ENCODE measurements at regions of chr9 and their contacts with region 1.

Region 1: DNA sequence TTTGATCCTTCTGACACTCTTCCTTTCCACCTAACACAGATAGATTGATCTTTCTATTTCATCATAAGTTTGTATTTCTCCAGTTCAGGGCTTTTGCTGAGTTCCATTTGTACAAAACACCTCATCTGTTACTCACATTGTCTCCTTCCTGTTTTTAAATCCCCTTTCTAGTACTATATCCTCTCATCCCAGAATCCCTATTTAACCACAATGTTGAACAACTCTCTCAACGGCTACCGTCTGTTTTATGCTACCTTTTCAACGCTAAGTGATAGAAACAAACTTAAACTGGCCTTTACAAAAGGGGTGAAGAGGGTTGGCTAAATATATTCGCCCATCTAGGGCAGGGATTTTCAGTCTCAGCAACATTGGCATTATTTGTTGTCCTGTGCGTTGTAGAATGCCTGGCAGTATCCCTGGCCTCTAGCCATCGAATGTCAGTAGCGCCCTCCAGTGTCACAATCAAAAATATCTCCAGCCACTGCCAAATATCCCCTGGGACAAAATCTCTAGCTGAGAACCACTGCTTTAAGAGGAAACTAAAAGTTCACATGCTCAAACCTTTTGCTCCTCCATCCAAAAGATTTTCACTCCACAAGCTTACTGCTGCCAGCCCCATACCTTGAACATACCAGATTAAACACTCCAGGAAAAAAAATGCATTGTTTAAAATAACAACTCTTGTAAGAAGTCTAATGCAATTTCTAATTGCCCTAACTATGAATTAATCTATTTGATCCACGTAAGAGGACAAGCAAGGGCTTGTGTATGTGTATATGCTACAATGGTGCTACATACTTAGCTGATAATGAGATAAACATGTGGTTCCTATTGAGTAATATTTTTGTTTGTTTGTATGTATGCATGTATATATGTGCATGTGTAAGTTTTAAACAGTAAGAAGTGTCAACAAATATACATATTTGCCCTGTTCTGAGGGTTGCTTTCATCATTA is 344.0 kb downstream of the PTPRD start:
- DNase-seq: peak; percentile 84
- H3K4me3 ChIP-seq: no peak overlapping the region
- H3K27ac ChIP-seq: peak overlapping the region; percentile 51
- H3K4me1 ChIP-seq: peaks cover 23% of the 10 kb centered on the region
- H3K27me3 ChIP-seq: no peaks in the 10 kb centered on the region
- CTCF ChIP-seq: peak; percentile 63 to 65
- POLR2A ChIP-seq: no peak

Region 2: GRCh38 chr9:10045598-10045997 is 223.2 kb before region 1 on chr9:
- CTCF ChIA-PET with region 1: interaction called, 46 read pairs
- POLR2A ChIA-PET with region 1: interaction called, 3 read pairs
- dilution Hi-C with region 1: no loop called
- intact Hi-C with region 1: no loop called
- DNase-seq: peak; percentile 58
- H3K4me3 ChIP-seq: no peak overlapping the region
- H3K27ac ChIP-seq: no peak overlapping the region
- H3K4me1 ChIP-seq: no peaks in the 10 kb centered on the region
- H3K27me3 ChIP-seq: no peaks in the 10 kb centered on the region
- CTCF ChIP-seq: peak; percentile 11 to 42
- POLR2A ChIP-seq: no peak

Region 3: DNA sequence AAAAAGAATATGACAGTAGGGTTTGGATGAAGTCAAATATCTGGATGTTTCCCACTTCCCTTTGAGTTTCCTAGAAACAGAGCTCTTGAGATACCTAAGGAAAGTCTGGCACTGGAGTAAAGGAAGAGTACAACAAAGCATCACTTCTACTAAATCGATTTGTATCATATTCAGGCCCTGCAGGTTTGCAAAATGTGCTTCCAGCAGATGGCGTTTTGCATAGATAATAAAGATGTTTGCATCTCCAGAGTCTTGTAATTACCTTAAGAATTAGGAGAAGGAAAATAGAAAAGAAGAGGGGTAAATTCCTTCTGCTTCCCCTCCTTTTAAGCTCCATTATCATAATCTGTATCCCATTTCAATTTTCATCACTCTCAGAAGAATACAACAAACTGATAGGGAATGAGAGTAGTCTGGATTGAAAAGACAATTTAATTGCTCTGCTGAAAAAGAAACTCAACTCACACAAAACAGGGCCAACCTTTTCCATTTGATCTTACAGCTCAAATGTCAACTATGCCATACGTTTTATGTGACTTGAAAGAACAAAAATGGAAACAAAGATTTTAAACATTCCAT is 36.4 kb before region 1 on chr9:
- CTCF ChIA-PET with region 1: interaction called, 84 read pairs
- POLR2A ChIA-PET with region 1: no interaction called
- dilution Hi-C with region 1: no loop called
- intact Hi-C with region 1: loop called (anchors 1 kb)
- DNase-seq: peak; percentile 45
- H3K4me3 ChIP-seq: no peak overlapping the region
- H3K27ac ChIP-seq: no peak overlapping the region
- H3K4me1 ChIP-seq: no peaks in the 10 kb centered on the region
- H3K27me3 ChIP-seq: no peaks in the 10 kb centered on the region
- CTCF ChIP-seq: peak; percentile 9 to 12
- POLR2A ChIP-seq: no peak

Region 4: DNA sequence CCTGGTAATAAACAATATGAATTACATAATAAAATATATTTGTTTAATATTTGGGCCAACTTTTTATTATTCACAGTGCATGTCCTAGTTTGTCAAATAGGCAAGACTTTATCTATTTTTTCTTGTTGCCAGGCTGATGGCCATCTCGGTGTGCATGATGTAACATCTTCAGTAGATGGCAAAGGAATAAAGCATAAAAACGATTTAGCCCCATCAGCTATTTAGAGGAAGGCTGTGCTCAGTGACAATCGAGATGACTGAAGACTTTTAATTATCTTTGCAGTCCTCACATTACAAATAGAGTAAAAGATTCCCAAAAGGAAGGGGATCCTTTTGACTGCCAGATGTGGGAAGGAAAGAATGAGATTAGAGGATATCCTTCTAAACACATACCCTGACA is 14.5 kb before region 1 on chr9:
- CTCF ChIA-PET with region 1: interaction called, 14 read pairs
- POLR2A ChIA-PET with region 1: no interaction called
- dilution Hi-C with region 1: no loop called
- intact Hi-C with region 1: no loop called
- DNase-seq: no peak
- H3K4me3 ChIP-seq: no peak overlapping the region
- H3K27ac ChIP-seq: no peak overlapping the region
- H3K4me1 ChIP-seq: no peaks in the 10 kb centered on the region
- H3K27me3 ChIP-seq: no peaks in the 10 kb centered on the region
- CTCF ChIP-seq: no peak
- POLR2A ChIP-seq: no peak